ENCODE measurements at regions of chr12 and their contacts with region 1.

Region 1: GRCh38 chr12:54701940-54702592 is 53.9 kb upstream of the DCD start:
- DNase-seq: peak; percentile 36
- ATAC-seq: peak; percentile 50; the same call in 2 of the 3 replicates
- H3K4me3 ChIP-seq: no peak overlapping the region
- H3K27ac ChIP-seq: no peak overlapping the region
- H3K4me1 ChIP-seq: no peaks in the 10 kb centered on the region
- H3K27me3 ChIP-seq: no peaks in the 10 kb centered on the region; a peak in 1 of 5 replicates
- CTCF ChIP-seq: peak; percentile 58
- EP300 ChIP-seq: no peak
- POLR2A ChIP-seq: no peak
- RAD21 ChIP-seq: peak; percentile 27; the same call in 1 of the 2 replicates

Region 2: GRCh38 chr12:54853995-54854566 is 152.0 kb after region 1 on chr12 and contains the start of gene MUCL1:
- CTCF ChIA-PET with region 1: no interaction called
- POLR2A ChIA-PET with region 1: no interaction called
- in situ Hi-C with region 1: no loop called
- intact Hi-C with region 1: loop called (anchors 2 kb)
- DNase-seq: peak; percentile 48
- ATAC-seq: peak; percentile 94
- H3K4me3 ChIP-seq: no peak within 1 kb of the TSS
- H3K27ac ChIP-seq: no peak within 1 kb of the TSS
- H3K4me1 ChIP-seq: no peaks in the 10 kb centered on the region
- H3K27me3 ChIP-seq: peaks cover 0 to 6% of the 10 kb centered on the region in 2 experiments; a peak in 1 of 5 replicates
- CTCF ChIP-seq: peak; percentile 75
- EP300 ChIP-seq: no peak
- POLR2A ChIP-seq: no peak
- RAD21 ChIP-seq: 0 out of 2 replicates have a peak, but pooled peaks have one; percentile 41
- total RNA-seq, gene MUCL1: not detected in 2 replicates

Region 3: GRCh38 chr12:54967461-54967860 is 265.4 kb after region 1 on chr12:
- CTCF ChIA-PET with region 1: no interaction called
- POLR2A ChIA-PET with region 1: no interaction called
- in situ Hi-C with region 1: no loop called
- intact Hi-C with region 1: no loop called
- DNase-seq: no peak
- ATAC-seq: no peak
- H3K4me3 ChIP-seq: no peak overlapping the region
- H3K27ac ChIP-seq: no peak overlapping the region
- H3K4me1 ChIP-seq: no peaks in the 10 kb centered on the region
- H3K27me3 ChIP-seq: peaks cover 0 to 6% of the 10 kb centered on the region in 2 experiments; a peak in 2 of 5 replicates
- CTCF ChIP-seq: no peak
- EP300 ChIP-seq: no peak
- POLR2A ChIP-seq: no peak
- RAD21 ChIP-seq: no peak

Region 4: DNA sequence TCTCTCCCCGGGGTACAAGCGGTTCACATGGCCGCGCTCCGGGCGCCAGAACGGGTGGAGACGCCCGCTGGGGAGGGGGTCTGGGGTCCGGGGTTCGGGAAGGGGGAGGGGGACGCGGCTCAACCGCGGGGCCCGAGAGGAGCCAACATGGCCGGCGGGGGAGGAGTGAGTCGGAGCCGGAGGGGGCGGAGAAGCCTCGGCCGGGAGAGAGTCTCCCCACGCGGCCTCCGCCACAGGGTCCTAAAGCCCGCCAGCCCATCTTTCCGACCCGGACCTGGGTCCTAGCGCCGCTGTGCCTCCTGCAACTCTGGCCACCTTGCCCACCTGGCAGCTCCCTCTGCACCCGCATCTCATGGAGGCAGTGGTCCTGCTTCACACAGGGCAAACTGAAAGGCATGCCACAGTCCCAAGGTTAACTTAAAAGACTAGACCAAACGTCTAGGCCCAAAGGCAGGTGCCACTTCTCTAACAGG is 1928.1 kb after region 1 on chr12 and contains the start of gene BAZ2A:
- CTCF ChIA-PET with region 1: no interaction called
- POLR2A ChIA-PET with region 1: no interaction called
- in situ Hi-C with region 1: no loop called
- intact Hi-C with region 1: no loop called
- DNase-seq: peak; percentile 64
- ATAC-seq: peak; percentile 78
- H3K4me3 ChIP-seq: peak within 1 kb of the TSS; percentile 98 to 100 (median 99)
- H3K27ac ChIP-seq: peak within 1 kb of the TSS; percentile 74
- H3K4me1 ChIP-seq: peaks cover 68% of the 10 kb centered on the region
- H3K27me3 ChIP-seq: no peaks in the 10 kb centered on the region; a peak in 1 of 5 replicates
- CTCF ChIP-seq: no peak
- EP300 ChIP-seq: peak in 1 of 2 experiments; percentile 26; a peak in 1 of 4 replicates
- POLR2A ChIP-seq: peak in 1 of 2 experiments; percentile 45; a peak in 1 of 4 replicates
- RAD21 ChIP-seq: no peak
- total RNA-seq, gene BAZ2A: 21.8 and 25.5 TPM in 2 replicates